ENCODE measurements at regions of chr22 and their contacts with region 1.

Region 1: DNA sequence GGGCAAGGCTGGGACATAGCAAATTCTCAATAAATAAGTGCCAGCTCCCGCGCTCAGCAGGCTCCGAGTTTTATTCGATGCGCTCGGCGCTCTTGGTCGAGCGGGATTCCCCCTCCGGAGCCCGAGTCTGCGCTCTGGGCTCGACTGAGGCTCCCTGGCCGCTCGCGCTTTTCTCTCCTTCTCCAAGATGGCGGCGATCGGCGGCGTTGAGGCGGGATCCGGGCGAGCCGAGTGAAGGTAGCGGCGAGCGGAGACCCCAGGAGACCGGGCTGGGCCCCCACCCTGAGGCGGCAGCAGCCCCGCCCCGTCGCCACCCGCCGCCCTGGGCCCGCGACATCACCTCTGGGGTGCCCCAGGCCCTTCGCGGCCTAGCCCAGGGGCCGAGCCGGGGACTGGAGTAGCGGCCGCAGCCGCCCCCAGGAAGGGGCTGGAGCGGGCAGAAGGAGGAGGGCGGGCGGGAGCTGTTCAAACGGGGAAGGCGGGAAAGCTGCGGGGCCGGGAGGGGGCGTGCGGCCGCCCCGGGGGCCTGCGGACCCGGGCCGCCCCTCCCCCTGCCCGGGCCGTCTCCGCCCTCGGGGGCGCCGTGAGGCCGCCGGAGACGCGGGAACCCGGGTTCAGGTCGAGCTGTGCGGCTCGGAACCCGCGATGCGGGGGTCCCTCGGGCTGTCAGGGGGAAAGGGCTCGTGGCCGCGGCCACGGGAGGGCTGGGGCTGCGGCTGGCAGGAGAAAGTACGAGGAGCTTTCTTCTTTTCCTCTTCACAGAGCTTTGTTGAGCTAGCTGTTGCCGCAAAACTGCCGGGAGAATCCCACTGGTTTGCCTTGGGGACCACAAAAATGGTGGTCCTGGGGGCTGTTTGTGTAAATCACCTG is at the start of gene HMGXB4:
- DNase-seq: peak; percentile 86
- ATAC-seq: peak; percentile 93
- H3K4me3 Mint-ChIP-seq: peak within 1 kb of the TSS; percentile 91
- H3K27ac Mint-ChIP-seq: peak within 1 kb of the TSS; percentile 94
- H3K4me1 Mint-ChIP-seq: peaks cover 22% of the 10 kb centered on the region
- H3K27me3 Mint-ChIP-seq: no peaks in the 10 kb centered on the region
- total RNA-seq, gene HMGXB4: 35.4 to 36.2 TPM

Region 2: DNA sequence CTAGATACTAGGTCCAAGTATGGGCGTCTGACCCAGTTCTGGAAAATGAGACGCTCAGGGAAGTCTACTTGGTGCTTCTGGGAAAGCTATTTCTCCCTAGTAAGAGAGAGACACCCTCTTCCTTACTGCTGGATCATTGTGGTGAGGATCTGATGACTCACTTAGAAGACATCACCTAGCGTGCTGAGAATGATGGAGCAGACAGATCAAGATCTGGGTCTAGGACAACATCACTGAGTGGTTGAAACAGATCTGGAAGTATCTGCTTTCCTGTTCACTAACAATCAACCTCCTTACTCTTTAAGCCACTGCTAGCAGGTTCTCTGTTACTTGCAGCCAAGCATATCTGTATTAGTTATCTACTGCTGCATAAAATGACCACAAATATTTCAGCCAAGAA is 38.5 kb before region 1 on chr22:
- POLR2A ChIA-PET with region 1: no interaction called
- DNase-seq: no peak
- ATAC-seq: no peak
- H3K4me3 Mint-ChIP-seq: no peak overlapping the region
- H3K27ac Mint-ChIP-seq: no peak overlapping the region
- H3K4me1 Mint-ChIP-seq: no peaks in the 10 kb centered on the region
- H3K27me3 Mint-ChIP-seq: peaks cover 3% of the 10 kb centered on the region

Region 3: DNA sequence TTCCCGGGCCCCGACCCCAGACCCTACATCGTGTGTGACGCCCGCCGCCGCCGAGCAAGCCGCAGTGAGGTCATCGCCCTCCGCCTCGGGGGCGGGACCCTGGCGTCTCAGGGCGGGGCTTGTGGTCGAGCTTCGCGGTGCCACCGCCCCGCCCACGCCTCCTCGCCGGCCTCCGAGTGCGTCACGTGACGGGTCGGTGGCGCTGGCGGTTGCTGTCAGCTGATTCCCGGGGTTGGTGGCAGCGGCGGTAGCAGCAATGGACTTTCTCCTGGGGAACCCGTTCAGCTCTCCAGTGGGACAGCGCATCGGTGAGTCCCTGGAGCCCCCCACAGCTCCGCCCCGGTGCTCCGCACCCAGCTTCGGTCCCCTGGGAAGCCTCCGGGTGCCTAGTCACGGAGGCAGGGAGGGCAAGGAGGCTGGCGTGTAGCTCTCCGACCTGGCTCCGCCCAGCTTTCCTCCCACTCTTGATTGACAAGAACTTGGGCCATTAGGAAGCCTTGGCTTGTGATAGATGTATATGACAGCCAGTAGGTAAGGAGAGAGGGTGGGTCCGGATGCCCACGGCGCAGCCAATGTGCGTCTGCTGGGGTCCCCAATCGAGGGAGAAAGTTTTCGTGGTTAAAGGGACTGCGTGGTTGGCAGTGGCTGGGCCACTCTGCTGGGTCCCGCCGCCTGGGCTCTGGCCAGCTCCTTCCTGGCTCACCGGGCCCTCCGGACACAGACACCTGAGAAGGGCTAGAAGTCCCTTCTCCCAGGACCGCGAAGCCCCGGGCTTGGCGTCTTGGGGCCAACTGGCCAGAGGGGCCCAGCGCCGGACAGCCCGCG is 42.3 kb after region 1 on chr22 and contains the start of gene TOM1:
- POLR2A ChIA-PET with region 1: interaction called, 15 read pairs
- DNase-seq: peak; percentile 98
- ATAC-seq: peak; percentile 98
- H3K4me3 Mint-ChIP-seq: peak within 1 kb of the TSS; percentile 95
- H3K27ac Mint-ChIP-seq: peak within 1 kb of the TSS; percentile 93
- H3K4me1 Mint-ChIP-seq: peaks cover 12% of the 10 kb centered on the region
- H3K27me3 Mint-ChIP-seq: no peaks in the 10 kb centered on the region
- total RNA-seq, gene TOM1: 36.7 to 39.5 TPM